Dendritic cell treated with granulocyte-macrophage colony-stimulating factor and Interleukin-4, amounts not matched to agents 40 ng/mL and 50 ng/mL, for 4 days (primary cell): ENCODE measurements at regions of chr18 and their contacts with region 1.

Region 1: DNA sequence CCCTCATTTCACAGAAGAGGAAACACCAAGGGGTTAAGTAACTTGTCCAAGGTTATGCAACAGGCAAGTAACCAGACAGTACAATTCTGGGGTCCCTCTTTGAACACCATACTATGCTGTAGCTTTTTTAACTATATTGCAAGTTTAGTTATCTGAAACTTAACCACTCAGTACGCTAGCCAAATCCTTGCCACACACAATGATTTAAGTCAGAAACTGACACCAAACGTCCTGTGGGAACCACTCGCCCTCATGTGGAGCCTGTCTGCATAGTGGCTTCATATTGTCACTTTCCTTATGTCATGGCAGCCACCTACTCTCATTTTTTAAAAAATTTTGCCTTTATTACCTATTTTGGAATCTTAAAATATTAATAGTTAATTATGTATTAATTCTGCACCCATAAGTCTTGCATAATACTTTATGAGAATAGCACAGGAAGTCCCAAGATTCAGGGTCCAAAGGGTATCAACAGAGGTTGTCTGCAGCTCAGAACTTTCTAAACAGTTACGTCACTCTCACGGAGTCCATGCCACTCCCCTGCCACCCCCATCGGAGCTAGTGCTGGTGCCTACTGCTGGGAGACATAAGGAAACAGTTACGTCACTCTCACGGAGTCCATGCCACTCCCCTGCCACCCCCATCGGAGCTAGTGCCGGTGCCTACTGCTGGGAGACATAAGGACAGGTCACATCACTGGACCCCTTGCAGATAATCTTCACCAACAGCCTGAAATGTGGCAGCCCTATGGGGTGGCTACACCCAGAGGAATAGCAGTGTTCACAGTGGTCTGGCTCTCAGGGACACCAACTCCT is 99.0 kb downstream of the L3MBTL4 start:
- H3K4me3 Mint-ChIP-seq: peak overlapping the region; percentile 44
- H3K27ac Mint-ChIP-seq: no peak overlapping the region
- H3K4me1 Mint-ChIP-seq: peaks cover 7% of the 10 kb centered on the region
- H3K27me3 Mint-ChIP-seq: no peaks in the 10 kb centered on the region

Region 2: GRCh38 chr18:6199777-6200176 is 115.9 kb before region 1 on chr18:
- intact Hi-C with region 1: no loop called
- H3K4me3 Mint-ChIP-seq: no peak overlapping the region
- H3K27ac Mint-ChIP-seq: no peak overlapping the region
- H3K4me1 Mint-ChIP-seq: no peaks in the 10 kb centered on the region
- H3K27me3 Mint-ChIP-seq: no peaks in the 10 kb centered on the region

Region 3: GRCh38 chr18:6370886-6371635 is 55.3 kb after region 1 on chr18:
- intact Hi-C with region 1: loop called (anchors 10 kb)
- H3K4me3 Mint-ChIP-seq: no peak overlapping the region
- H3K27ac Mint-ChIP-seq: no peak overlapping the region
- H3K4me1 Mint-ChIP-seq: no peaks in the 10 kb centered on the region
- H3K27me3 Mint-ChIP-seq: no peaks in the 10 kb centered on the region

Region 4: GRCh38 chr18:6414118-6414722 is 98.5 kb after region 1 on chr18:
- intact Hi-C with region 1: loop called (anchors 5 kb)
- H3K4me3 Mint-ChIP-seq: peak overlapping the region; percentile 85
- H3K27ac Mint-ChIP-seq: peak overlapping the region; percentile 80
- H3K4me1 Mint-ChIP-seq: peaks cover 27% of the 10 kb centered on the region
- H3K27me3 Mint-ChIP-seq: peaks cover 14% of the 10 kb centered on the region